ENCODE measurements at regions of chr11 and their contacts with region 1.

Region 1: GRCh38 chr11:8099291-8099899 is 18.4 kb downstream of the TUB start:
- DNase-seq: peak; percentile 83
- ATAC-seq: peak; percentile 89
- H3K4me3 ChIP-seq: no peak overlapping the region
- H3K27ac ChIP-seq: no peak overlapping the region
- H3K4me1 ChIP-seq: no peaks in the 10 kb centered on the region
- H3K27me3 ChIP-seq: no peaks in the 10 kb centered on the region
- CTCF ChIP-seq: peak; percentile 88

Region 2: DNA sequence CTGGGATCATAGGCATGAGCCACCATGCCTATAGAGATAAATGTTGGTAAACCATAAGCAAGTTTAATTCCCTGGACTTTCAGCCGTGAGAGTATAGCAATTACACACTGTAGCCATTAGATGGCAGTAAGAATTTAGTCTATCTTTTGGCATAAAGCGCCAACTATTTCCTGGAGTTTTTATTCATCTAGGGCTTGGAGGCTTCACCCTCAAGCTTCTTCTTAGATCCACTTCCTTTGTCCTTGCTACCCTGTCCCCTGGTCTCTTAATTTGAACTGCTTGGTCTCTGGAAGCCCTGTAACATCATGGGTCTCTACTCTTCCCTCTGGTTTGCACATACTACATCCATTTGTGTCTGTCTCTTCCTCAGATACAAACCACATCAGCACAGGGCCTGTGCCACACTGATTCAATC is 206.5 kb before region 1 on chr11:
- CTCF ChIA-PET with region 1: no interaction called
- POLR2A ChIA-PET with region 1: no interaction called
- intact Hi-C with region 1: loop called (anchors 2 kb)
- DNase-seq: peak; percentile 81
- ATAC-seq: peak; percentile 84
- H3K4me3 ChIP-seq: no peak overlapping the region
- H3K27ac ChIP-seq: no peak overlapping the region
- H3K4me1 ChIP-seq: peaks cover 21% of the 10 kb centered on the region
- H3K27me3 ChIP-seq: no peaks in the 10 kb centered on the region
- CTCF ChIP-seq: peak; percentile 76

Region 3: DNA sequence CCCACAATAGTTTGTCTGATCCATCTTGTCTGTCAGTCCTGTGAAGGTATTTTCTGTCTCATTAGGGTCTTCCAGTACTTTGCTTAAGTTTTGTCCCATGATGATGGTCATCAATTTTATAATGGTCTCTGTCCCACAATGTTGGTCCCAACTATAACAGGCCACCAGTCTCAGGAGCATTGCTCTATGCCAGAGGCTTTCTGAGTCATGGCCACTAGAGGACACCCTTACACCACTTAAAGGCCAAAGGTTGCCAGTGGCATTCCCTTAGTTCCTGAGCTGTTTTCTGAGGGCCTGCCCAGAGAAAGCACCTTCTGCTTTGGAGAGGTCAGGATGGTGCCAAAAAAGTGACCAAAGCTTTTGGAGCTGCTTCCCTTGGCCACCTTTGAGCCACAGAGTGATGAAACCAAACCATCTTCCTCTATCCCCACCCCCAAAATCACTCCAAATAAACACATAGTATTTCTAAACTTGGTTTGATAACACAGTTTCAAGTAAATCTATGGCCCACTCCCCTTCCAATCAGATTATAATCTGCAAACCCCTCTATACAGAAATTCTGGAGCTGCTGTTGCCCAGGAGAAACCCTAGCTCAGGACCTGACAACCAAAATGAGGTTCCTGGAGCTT is 92.9 kb before region 1 on chr11:
- CTCF ChIA-PET with region 1: interaction called, 49 read pairs
- POLR2A ChIA-PET with region 1: interaction called, 4 read pairs
- intact Hi-C with region 1: loop called (anchors 1 kb)
- DNase-seq: peak; percentile 82
- ATAC-seq: peak; percentile 94
- H3K4me3 ChIP-seq: no peak overlapping the region
- H3K27ac ChIP-seq: no peak overlapping the region
- H3K4me1 ChIP-seq: no peaks in the 10 kb centered on the region
- H3K27me3 ChIP-seq: no peaks in the 10 kb centered on the region
- CTCF ChIP-seq: peak; percentile 92

Region 4: DNA sequence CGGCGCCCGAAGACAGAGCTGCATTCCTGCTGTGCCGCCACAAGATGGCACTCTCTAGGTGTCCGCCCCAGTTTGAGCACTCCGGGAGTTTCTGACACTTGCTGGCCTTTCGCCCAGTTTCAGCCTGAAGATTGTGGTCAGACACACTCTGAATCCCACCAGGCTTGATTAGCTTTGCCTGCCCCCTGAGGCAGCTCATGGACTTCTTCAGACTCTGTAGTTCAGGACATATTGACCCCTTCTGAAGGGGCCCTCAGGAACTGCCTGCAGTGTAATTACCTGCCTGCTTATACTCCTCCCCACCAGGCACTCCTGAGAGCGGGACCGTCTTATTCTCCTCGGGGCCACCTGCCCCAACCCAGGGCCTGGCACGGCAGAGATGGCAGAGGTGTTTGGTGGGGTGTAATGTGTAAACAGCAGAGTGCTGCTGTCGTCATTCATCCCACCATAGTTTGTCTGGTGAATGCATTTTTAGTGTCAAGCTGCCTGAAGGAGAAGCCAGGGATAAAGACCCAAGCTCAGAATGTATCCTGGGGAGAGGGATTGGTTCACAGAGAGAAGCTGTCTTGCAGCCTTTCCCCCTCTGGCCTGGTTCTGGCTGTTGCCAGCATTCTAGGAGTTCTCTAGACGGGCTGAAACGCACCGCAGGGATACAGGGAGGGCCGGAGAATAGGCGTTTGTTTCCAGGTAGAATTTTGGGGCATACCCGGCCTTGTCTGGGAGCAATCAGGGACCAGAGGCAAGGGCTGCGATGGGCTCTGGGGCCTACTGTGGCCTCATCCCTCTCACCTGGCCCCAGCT is 65.9 kb before region 1 on chr11:
- CTCF ChIA-PET with region 1: interaction called, 35 read pairs
- POLR2A ChIA-PET with region 1: no interaction called
- intact Hi-C with region 1: loop called (anchors 1 kb)
- DNase-seq: peak; percentile 69
- ATAC-seq: peak; percentile 85
- H3K4me3 ChIP-seq: no peak overlapping the region
- H3K27ac ChIP-seq: no peak overlapping the region
- H3K4me1 ChIP-seq: no peaks in the 10 kb centered on the region
- H3K27me3 ChIP-seq: peaks cover 33% of the 10 kb centered on the region
- CTCF ChIP-seq: peak; percentile 79

Region 5: GRCh38 chr11:8070417-8071115 is 28.8 kb before region 1 on chr11:
- CTCF ChIA-PET with region 1: no interaction called
- POLR2A ChIA-PET with region 1: no interaction called
- intact Hi-C with region 1: no loop called
- DNase-seq: peak; percentile 50
- ATAC-seq: peak; percentile 57
- H3K4me3 ChIP-seq: no peak overlapping the region
- H3K27ac ChIP-seq: no peak overlapping the region
- H3K4me1 ChIP-seq: peaks cover 16% of the 10 kb centered on the region
- H3K27me3 ChIP-seq: peaks cover 16% of the 10 kb centered on the region
- CTCF ChIP-seq: peak; percentile 58

Measured in PC-3 (cell line).